ENCODE measurements at regions of chr1 and their contacts with region 1.

Region 1: DNA sequence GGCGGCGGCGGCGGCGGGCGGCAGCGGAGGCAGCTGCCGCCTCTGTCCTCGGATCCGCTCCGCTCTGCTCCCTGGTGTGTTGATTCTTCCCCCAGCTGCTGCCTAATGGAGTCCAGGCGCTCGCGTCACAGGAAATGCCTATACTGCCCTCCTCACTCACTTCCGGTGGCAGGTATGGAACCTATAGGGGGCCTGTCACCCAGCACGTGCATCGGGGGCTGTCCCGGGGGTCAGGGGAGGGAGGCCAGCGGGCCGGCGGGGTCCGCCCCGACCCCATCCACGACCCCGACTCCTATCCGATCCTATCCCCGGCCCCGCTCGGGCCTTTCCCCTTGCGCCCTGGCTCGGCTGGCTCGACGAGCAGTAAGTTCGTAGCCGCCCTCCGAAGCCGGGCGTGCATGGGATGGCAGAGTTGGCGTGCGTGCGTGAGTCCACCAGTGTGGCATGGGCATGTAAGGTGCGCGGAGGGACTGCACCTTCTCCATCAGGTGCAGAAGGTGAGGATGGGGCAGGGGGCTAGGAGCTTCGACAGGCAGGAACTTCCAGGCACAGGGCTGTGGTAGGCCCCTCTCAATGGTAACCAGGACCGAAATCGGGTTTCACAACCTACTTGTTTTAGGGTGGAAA is at the start of gene WDR26:
- DNase-seq: peak; percentile 83
- H3K4me3 Mint-ChIP-seq: peak within 1 kb of the TSS; percentile 92
- H3K27ac Mint-ChIP-seq: peak within 1 kb of the TSS; percentile 95
- H3K4me1 Mint-ChIP-seq: peaks cover 53% of the 10 kb centered on the region
- H3K27me3 Mint-ChIP-seq: no peaks in the 10 kb centered on the region
- total RNA-seq, gene WDR26: 91.6 and 95.8 TPM in 2 replicates

Region 2: DNA sequence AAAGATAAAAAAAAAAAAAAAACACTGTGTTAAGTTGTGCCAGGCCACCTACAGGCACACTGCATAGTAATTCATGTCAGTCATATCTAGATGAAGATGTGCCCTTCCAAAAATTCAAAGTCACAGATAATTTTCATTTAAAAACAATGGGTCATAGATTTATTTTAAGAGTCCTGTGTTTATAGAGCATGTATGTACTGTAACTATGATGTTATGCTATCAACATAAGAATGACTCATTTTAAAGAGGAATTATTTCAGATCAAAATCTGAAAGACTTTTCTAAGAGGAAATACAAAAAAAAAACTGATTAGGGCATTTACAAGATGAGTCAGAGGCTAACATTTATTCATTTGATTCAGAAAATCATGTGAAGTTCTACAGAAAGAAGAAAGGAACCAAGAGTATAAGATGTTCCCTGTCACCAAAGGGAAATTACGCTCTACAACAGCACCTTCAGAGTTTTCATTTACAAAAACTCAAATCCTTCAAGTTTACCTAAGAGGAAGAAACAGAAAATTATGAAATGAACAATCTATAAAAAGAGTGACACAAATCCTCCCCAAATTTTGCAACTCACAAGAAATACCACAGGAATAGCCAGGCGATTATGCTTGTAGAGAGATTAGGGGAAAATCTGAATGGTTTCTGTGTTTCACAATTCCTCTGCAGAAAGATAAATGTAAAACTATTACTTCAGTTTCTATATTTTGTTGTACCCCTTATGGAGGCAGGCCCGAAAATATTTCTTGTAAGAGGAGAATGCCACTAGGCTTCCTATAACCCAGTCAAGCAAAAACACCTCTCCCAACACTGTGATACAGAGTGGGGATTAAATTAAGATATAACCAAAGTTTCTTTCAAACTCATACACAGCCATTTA is 602.8 kb before region 1 on chr1:
- intact Hi-C with region 1: loop called (anchors 5 kb)
- DNase-seq: no peak
- H3K4me3 Mint-ChIP-seq: peak overlapping the region; percentile 23
- H3K27ac Mint-ChIP-seq: peak overlapping the region; percentile 90
- H3K4me1 Mint-ChIP-seq: peaks cover 10% of the 10 kb centered on the region
- H3K27me3 Mint-ChIP-seq: no peaks in the 10 kb centered on the region

Region 3: DNA sequence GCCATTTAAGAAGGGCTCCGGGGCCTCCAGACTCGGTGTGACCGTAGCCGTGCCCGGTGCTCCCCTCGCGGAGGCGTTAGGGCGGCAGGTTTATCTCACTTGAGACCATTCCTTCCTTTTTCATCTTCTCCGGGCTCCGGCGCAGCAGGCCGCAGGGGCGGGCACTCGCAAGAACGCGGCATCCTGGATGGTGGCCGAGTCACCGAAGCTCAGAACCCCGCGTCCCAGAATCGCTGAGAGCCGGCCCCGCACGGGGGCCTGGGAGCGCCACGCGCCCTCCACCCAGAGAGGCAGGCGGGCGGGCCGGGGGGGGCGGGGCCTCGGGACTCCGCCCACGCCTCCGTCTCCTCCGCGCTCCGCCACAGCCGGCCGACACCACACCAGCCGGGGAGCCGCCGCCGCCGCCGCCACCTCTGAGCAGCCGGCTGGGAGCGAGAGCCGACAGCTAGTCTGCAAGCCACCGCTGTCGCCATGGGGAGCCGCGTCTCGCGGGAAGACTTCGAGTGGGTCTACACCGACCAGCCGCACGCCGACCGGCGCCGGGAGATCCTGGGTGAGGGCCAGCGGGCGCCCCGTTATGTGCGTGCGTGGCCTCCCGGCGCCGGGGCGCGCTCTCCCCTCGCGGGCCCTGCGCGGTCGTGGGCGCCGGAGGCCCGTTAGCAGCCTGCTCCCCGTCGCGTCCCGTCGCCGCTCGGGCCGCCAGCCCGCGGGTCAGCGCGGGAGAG is 251.8 kb before region 1 on chr1 and contains the start of gene DEGS1:
- intact Hi-C with region 1: loop called (anchors 1 kb)
- DNase-seq: peak; percentile 80
- H3K4me3 Mint-ChIP-seq: peak within 1 kb of the TSS; percentile 96
- H3K27ac Mint-ChIP-seq: peak within 1 kb of the TSS; percentile 93
- H3K4me1 Mint-ChIP-seq: peaks cover 46% of the 10 kb centered on the region
- H3K27me3 Mint-ChIP-seq: peaks cover 3% of the 10 kb centered on the region
- total RNA-seq, gene DEGS1: 54.7 and 57.1 TPM in 2 replicates

Region 4: DNA sequence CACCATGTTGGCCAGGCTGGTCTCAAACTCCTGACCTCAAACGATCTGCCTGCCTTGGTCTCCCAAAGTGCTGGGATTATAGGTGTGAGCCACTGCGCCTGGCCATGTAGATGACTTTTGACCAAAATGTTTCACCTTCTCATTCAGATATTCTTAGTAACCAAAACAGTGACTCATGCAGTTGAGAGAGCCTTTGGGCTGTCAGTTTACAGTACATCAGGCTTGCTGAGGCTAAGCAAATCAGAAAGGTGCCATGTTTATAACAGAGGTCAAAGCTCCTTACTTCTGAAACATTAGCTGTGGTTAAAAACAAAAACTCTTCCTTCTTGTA is 57.2 kb before region 1 on chr1:
- intact Hi-C with region 1: loop called (anchors 1 kb)
- DNase-seq: no peak
- H3K4me3 Mint-ChIP-seq: peak overlapping the region; percentile 66
- H3K27ac Mint-ChIP-seq: peak overlapping the region; percentile 94
- H3K4me1 Mint-ChIP-seq: peaks cover 91% of the 10 kb centered on the region
- H3K27me3 Mint-ChIP-seq: no peaks in the 10 kb centered on the region

Region 5: DNA sequence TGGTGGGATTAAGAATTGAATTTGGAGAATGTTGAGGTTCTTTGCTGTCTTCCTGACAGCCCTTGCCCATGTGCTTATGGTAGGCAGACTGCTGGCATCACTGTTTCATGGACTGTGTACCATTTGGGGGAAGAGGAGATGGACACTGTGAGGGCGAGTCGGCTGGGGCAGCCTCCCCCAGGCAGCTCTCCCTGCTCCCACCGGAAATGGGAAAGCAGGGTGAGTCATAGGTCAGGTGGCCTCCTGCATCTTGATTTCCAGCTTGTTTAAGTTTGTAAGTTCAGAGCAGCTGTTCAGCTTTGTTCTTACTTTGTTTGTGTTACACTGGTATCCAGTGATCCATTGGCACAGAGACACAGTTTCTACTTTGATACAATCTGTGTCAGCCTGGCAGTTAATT is 94.1 kb after region 1 on chr1:
- intact Hi-C with region 1: no loop called
- DNase-seq: no peak
- H3K4me3 Mint-ChIP-seq: no peak overlapping the region
- H3K27ac Mint-ChIP-seq: no peak overlapping the region
- H3K4me1 Mint-ChIP-seq: no peaks in the 10 kb centered on the region
- H3K27me3 Mint-ChIP-seq: peaks cover 7% of the 10 kb centered on the region

Region 6: GRCh38 chr1:225428068-225428880 is 993.5 kb after region 1 on chr1:
- intact Hi-C with region 1: loop called (anchors 10 kb)
- DNase-seq: peak; percentile 94
- H3K4me3 Mint-ChIP-seq: peak overlapping the region; percentile 83
- H3K27ac Mint-ChIP-seq: peak overlapping the region; percentile 90
- H3K4me1 Mint-ChIP-seq: peaks cover 56% of the 10 kb centered on the region
- H3K27me3 Mint-ChIP-seq: no peaks in the 10 kb centered on the region

Measured in activated T-helper 1 cell treated with anti-CD3 and anti-CD28 coated beads, Interleukin-12 subunit alpha, Interleukin-12 subunit beta, Interleukin-2, Interleukin-4 antibody, amounts not matched to agents 30 ng/mL and 10 ng/mL and 1 ng/mL, durations not matched to agents 14 hours and 24 hours and 36 hours (primary cell).